ENCODE measurements at regions of chr12 and their contacts with region 1.

Region 1: DNA sequence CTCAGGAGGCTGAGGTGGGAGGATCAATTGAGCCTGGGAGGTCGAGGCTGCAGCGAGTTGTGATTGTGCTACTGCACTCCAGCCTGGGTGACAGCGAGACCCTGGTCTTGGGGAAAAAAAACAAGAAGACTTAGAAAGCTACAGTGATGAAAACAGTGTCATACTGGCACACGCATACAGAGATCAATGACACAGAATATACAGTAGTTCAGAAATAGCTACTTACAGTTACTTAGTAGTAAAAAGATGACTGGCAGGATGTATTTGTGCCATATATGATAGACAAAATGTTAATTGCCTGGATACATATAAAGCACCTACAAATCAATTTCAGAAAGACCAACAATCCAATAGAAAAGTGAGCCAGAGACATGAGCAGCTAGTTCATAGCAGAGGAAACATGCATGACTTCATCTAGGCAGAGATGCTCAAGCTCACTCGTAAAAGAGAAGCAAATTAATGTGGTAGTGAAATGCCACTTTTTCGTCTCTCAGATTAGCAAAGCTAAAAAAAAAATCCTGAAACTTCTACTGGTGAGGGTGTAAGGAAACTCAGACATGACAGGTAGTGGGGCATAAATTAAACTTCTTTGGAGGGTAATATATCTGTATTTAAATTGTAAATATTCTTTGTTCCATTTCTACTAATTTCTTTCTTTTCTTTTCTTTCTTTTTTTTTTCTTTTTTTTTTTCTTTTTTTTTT is 2.5 kb upstream of the ALDH2 start:
- DNase-seq: no peak
- H3K4me3 Mint-ChIP-seq: no peak overlapping the region
- H3K27ac Mint-ChIP-seq: no peak overlapping the region
- H3K4me1 Mint-ChIP-seq: no peaks in the 10 kb centered on the region
- H3K27me3 Mint-ChIP-seq: peaks cover 17% of the 10 kb centered on the region
- CTCF ChIP-seq: no peak

Region 2: DNA sequence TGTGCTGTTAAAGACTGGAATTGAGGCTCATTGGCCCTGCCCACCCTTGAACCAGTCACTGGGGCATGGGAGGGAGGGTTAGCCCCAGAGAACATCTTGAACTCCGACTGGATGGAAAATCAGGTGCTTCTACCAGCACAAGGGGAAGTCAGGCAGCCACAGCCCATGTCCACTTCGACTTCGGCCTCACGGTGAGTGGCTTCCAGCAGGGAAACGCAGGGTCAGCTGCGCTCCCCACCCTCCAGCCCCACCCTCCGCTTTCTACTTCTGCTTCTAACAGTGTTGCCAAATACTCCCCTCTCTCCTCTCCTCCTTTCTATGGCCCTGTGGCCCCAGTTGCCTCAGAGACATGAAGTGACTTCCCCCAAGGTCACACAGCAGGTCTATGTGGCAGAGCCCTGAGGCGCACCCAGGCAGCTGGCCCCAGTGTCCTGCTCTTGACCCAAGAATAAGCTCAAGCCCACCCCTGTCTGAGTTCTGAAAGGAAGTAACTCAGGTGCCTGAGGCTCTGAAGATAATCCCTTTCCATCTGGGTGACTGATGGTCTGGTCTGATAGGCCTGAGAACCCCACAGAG is 370.5 kb before region 1 on chr12:
- CTCF ChIA-PET with region 1: no interaction called
- POLR2A ChIA-PET with region 1: no interaction called
- intact Hi-C with region 1: no loop called
- DNase-seq: no peak
- H3K4me3 Mint-ChIP-seq: no peak overlapping the region
- H3K27ac Mint-ChIP-seq: no peak overlapping the region
- H3K4me1 Mint-ChIP-seq: peaks cover 14% of the 10 kb centered on the region
- H3K27me3 Mint-ChIP-seq: no peaks in the 10 kb centered on the region
- CTCF ChIP-seq: no peak

Region 3: DNA sequence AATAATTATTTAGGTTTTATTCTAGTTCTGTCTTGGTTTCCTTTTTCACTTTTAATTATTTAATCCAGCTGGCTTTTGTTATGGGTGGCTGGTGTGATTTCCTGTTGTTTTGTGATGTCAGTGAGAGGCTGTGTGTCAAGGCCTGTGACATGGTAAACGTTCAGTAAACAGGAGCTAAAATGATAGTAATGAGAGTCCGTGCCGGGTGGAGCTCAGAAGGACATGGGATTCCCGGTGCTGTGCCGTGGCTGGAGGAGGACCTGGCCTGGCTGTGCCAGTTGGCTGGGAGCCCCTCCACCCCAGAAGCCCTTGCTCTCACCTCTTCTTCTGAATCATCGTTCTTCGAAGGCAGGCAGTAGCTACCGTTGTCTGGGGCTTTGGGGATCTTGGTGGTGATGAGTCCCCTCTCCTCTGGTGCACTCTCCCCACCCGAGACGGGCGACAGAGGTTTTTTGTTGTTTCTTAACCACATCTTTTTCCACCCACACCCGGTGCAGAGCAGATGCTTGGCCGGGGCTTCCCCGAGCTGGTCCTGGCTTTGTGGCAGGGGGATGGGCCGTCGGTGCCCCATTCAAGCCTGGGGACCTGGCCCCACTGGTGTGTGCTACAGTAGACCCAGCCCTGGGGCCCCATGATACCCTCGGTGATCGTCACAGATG is 329.5 kb before region 1 on chr12:
- CTCF ChIA-PET with region 1: no interaction called
- POLR2A ChIA-PET with region 1: no interaction called
- intact Hi-C with region 1: no loop called
- DNase-seq: peak; percentile 59
- H3K4me3 Mint-ChIP-seq: no peak overlapping the region
- H3K27ac Mint-ChIP-seq: peak overlapping the region; percentile 55
- H3K4me1 Mint-ChIP-seq: peaks cover 48% of the 10 kb centered on the region
- H3K27me3 Mint-ChIP-seq: no peaks in the 10 kb centered on the region
- CTCF ChIP-seq: no peak

Region 4: GRCh38 chr12:111753144-111753881 is 11.0 kb before region 1 on chr12:
- CTCF ChIA-PET with region 1: interaction called, 21 read pairs
- POLR2A ChIA-PET with region 1: interaction called, 3 read pairs
- intact Hi-C with region 1: no loop called
- DNase-seq: peak; percentile 55
- H3K4me3 Mint-ChIP-seq: no peak overlapping the region
- H3K27ac Mint-ChIP-seq: no peak overlapping the region
- H3K4me1 Mint-ChIP-seq: no peaks in the 10 kb centered on the region
- H3K27me3 Mint-ChIP-seq: no peaks in the 10 kb centered on the region
- CTCF ChIP-seq: peak; percentile 64

Region 5: DNA sequence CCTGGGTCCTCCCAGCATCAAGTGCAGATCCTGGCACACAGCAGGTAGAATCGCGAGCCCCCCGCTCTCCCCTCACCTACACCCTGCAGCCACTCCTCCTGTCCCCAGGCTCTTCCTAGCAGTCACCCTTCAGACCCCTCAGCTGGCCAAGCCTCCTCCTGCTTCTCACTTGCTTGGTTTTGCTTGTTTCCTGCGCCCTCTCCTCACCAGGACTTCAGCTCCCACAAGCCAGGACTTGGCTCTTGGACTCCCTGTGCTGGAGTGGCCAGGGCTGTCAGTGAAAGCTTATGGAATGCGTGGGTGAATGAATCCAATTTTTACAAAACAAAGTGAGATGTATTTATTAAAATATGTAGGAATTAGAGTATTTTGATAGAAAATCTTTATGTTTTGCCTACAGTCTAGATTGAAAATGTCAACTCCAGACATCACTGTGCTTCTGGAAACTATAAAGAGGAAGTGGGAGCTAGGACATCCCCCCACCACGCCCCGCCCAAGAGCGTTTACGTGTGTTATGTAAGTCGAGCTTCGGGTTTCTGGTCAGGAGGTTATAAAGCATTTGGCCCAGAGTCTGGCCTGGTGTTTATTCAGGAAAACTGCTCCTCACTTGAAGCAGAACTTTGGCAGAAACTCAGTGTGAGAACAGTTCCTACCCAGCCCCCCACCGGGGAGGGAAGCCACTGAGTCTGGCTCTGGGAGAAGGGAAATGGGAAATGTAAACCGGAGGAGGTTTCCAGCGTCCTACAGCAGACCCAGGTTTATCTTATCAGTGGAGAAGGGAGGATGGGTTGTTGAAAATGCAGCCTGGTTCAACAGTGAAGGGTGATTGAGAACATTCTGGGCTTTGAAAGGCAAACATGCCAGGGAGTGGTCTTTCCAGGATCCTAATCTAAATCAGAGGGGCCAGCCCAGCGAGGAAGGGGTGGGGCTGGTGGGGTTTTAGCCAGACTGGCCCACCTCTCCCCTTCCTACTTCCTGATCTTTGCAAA is 11.2 kb after region 1 on chr12:
- CTCF ChIA-PET with region 1: no interaction called
- POLR2A ChIA-PET with region 1: interaction called, 16 read pairs
- intact Hi-C with region 1: no loop called
- DNase-seq: peak; percentile 89
- H3K4me3 Mint-ChIP-seq: peak overlapping the region; percentile 63
- H3K27ac Mint-ChIP-seq: peak overlapping the region; percentile 93
- H3K4me1 Mint-ChIP-seq: peaks cover 24% of the 10 kb centered on the region
- H3K27me3 Mint-ChIP-seq: no peaks in the 10 kb centered on the region
- CTCF ChIP-seq: no peak

Region 6: GRCh38 chr12:112025808-112026375 is 261.6 kb after region 1 on chr12:
- CTCF ChIA-PET with region 1: no interaction called
- POLR2A ChIA-PET with region 1: no interaction called
- intact Hi-C with region 1: no loop called
- DNase-seq: no peak
- H3K4me3 Mint-ChIP-seq: no peak overlapping the region
- H3K27ac Mint-ChIP-seq: peak overlapping the region; percentile 73
- H3K4me1 Mint-ChIP-seq: peaks cover 6% of the 10 kb centered on the region
- H3K27me3 Mint-ChIP-seq: no peaks in the 10 kb centered on the region
- CTCF ChIP-seq: no peak

Measured in MCF 10A (cell line).